ENCODE measurements at regions of chr1 and their contacts with region 1.

Region 1: DNA sequence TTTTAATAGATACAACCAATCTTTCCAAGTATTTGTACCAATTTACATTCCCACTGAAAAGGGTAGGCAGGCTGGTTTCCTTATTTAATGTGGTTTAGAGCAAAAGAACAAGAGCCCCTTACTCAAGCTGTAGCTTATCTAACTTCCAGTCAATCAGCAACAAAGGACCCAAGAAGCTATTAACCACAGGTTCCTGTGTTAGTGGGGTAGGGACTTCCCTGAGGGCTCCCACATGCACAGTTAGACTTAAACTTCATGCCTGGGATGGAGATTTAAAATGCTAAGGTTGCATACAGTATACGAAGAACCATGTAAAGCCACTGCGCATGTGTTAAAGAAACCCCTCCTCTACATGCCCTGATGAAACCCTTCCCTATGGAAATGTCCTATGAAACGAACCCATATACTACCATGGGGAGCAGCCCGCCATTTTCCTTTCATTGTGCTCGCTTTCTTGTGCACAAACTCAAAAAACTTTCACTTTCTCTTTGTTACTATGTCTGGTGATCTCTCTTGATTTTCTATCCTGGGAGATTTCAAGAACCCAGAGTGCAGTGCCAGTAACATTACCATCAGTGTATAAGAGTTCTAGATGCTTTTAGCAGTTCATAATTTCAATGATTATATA is 23.3 kb upstream of the ST6GALNAC5 start:
- DNase-seq: no peak
- H3K4me3 ChIP-seq: no peak overlapping the region
- CTCF ChIP-seq: no peak
- POLR2A ChIP-seq: no peak

Region 2: DNA sequence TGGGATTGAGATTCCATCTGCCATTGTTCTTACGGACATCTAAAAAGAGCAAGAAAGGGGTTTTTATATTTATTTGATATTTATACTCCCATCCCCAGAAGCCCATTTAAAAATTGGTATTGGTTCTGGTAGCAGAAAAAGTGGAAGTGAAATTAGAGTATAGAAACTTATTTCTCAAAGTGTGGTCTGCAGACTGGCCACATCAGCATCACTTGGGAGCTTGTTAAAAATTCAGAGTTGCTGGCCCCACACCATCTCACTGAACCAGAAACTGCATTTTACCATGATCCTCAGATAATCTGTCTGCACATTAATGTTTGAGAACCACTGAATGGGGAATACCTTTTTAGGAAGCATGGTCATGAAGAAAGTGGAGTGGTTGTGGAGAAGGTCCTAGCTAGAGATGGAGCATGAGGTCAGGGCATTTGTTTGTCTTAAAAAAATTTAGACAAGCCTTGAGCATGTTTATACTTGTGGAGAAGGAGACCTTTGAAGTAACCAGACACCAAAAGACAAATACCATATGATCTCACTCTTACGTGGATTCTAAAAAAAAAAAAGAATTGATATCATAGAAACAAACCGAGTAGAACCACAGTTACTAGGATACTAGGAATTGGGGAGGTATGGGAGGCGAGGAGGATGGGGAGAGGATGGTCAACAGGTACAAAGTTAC is 653.0 kb before region 1 on chr1:
- intact Hi-C with region 1: no loop called
- DNase-seq: no peak
- H3K4me3 ChIP-seq: no peak overlapping the region
- CTCF ChIP-seq: no peak
- POLR2A ChIP-seq: no peak

Region 3: DNA sequence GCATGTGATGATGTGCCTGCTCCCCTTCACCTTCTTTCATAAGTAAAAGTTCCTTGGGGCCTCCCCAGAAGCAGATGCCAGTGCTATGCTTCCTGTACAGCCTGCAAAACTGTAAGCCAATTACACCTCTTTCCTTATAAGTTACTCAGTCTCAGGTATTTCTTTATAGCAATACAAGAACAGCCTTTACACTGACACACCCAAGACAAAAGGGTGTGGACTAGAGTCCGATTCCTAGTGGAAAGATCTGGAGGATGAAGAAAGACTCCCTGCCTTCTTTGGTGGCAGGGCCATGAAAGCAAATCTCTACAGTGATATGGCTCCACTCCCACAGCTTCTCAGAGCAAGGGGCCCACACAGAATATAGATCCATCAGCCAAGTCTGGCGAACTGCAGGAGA is 186.3 kb before region 1 on chr1:
- intact Hi-C with region 1: no loop called
- DNase-seq: no peak
- H3K4me3 ChIP-seq: no peak overlapping the region
- CTCF ChIP-seq: no peak
- POLR2A ChIP-seq: no peak

Region 4: GRCh38 chr1:76782809-76783208 is 61.1 kb before region 1 on chr1:
- intact Hi-C with region 1: loop called (anchors 2 kb)
- DNase-seq: no peak
- H3K4me3 ChIP-seq: no peak overlapping the region
- CTCF ChIP-seq: no peak
- POLR2A ChIP-seq: no peak